Lower leg skin (tissue), 4 donors: ENCODE measurements at regions of chr2 and their contacts with region 1.

Region 1: GRCh38 chr2:224357098-224357901 is 44.6 kb downstream of the FAM124B start:
- DNase-seq: peak in 1 of 2 donors; percentile 63
- H3K4me3 ChIP-seq: no peak overlapping the region
- CTCF ChIP-seq: peak in 1 of 3 donors; percentile 73
- POLR2A ChIP-seq: no peak

Region 2: DNA sequence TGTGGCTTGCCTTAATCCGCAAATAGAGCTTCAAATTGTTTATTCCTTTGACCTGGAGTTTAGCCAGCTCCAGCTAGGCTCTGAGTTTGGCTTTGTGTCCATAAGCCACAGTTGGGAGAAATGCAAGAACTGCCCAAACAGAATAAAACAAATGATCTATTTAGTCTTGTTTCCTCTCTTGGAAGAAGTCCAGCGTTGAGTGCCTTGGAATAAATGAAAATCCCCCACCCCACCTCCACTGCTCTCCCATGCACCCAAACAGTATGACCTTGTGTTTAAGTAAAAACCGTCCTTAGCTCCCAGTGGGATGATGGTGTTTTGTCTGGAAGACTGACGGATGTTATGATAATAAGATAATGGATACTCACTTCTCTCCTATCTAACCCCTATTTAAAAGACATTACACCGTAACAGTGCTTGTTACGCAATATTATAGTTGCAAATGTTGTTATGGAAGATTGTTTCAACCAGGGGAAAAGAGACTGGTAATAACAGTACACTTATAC is 315.1 kb before region 1 on chr2:
- intact Hi-C with region 1: no loop called
- DNase-seq: no peak
- H3K4me3 ChIP-seq: no peak overlapping the region
- CTCF ChIP-seq: no peak
- POLR2A ChIP-seq: no peak

Region 3: DNA sequence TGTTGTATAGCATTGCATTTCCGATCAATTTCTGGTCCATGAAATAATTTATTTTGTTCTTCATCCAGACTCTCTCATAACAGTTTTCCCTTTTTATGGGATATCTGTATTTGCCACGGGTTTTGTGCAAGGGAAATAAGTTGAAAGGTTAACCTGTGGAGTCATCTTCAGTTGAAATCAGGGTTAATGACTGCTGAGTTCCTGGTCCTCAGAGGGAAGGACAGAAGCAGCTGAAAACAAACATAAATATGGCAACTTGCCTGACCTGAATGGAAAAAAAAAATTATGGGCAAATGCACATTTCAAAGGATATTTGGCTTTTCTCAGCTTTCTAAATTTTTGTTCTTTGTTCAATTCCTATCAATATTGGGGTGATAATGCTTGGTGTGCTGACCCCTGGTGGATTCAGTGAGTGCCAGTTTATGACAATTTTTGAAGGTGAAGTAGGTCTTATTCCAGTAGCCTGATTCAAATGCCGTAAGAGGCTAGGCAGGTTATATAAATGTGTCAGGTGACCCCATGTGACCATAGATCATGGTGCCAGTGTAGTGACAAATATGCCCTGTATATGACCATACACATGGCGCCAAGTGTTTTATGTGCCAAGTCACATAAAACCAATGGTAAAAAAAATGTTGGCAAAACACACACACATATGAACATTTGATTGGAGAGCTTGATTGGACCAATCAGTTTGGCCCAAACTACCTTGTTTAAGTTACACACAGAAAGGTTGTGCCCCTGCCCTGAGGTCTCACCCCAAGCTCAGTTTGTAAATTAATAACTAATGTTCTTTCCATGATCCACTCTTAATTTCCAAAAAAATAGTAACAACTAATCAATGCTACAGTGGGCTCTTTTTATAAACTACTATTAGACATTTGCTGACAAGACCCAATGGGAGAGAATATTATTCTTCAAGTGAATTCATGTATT is 92.2 kb after region 1 on chr2:
- intact Hi-C with region 1: loop called (anchors 10 kb)
- DNase-seq: no peak
- H3K4me3 ChIP-seq: no peak overlapping the region
- CTCF ChIP-seq: no peak
- POLR2A ChIP-seq: no peak

Region 4: GRCh38 chr2:224545884-224546644 is 188.8 kb after region 1 on chr2:
- intact Hi-C with region 1: no loop called
- DNase-seq: no peak
- H3K4me3 ChIP-seq: no peak overlapping the region
- CTCF ChIP-seq: no peak
- POLR2A ChIP-seq: no peak

Region 5: GRCh38 chr2:224561234-224562005 is 204.1 kb after region 1 on chr2:
- intact Hi-C with region 1: no loop called
- DNase-seq: no peak
- H3K4me3 ChIP-seq: no peak overlapping the region
- CTCF ChIP-seq: no peak
- POLR2A ChIP-seq: no peak

Region 6: DNA sequence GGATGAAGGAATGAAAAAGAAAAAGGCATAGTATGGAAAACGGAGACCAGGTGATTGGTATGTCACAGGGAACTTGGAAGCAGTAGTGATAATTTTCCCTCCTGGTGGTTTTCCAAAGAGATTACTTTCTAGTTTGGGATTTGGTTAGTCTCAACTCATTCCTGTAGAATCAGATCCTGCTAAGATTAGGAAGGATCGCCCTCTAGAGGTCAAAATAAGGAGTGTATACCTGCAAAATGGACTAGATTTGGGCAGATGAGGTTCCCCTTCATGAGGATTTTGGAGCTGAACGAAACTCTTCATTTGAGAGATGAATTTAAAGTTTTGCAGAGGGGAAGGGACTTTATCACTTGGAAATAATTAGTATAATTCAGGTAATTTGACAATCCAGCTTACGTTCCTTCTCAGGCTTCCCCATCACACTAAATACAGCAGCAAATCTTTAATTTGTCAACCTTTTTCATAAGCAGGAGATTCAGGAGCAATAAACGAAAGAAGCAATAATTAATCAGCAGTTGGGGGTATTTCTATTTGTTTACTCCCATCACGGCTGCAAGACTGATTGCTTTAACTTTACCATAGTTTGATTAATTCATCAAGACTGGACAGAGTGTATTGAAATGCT is 293.6 kb after region 1 on chr2:
- intact Hi-C with region 1: loop called (anchors 2 kb)
- DNase-seq: no peak
- H3K4me3 ChIP-seq: no peak overlapping the region
- CTCF ChIP-seq: peak in 1 of 3 donors; percentile 57
- POLR2A ChIP-seq: no peak

Region 7: GRCh38 chr2:226077031-226077430 is 1719.7 kb after region 1 on chr2:
- intact Hi-C with region 1: no loop called
- DNase-seq: no peak
- H3K4me3 ChIP-seq: no peak overlapping the region
- CTCF ChIP-seq: no peak
- POLR2A ChIP-seq: no peak